ENCODE measurements at regions of chr12 and their contacts with region 1.

Region 1: DNA sequence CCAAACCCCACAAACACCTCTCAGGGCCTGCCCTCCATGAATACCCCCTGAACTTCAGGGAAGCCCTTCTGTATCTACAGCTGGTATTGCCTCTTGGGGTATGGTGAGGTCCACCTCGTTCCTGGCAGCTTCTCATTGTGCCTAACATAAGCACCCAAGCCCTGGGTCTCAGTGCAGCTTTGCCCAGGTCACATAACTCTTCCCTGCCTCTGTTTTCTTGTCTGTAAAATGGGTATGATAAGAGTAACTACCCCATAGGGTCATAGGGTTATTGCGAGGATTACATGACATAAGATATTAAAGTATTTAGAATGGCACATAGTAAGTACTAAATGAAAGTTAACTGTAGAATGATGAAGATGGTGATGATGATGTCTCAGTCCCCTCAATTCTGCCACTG is 190.0 kb upstream of the PWP1 start:
- DNase-seq: no peak
- H3K4me3 ChIP-seq: no peak overlapping the region
- H3K27ac ChIP-seq: no peak overlapping the region
- H3K4me1 ChIP-seq: peaks cover 0 to 11% of the 10 kb centered on the region in 2 donors
- H3K27me3 ChIP-seq: no peaks in the 10 kb centered on the region
- CTCF ChIP-seq: no peak
- POLR2A ChIP-seq: no peak

Region 2: DNA sequence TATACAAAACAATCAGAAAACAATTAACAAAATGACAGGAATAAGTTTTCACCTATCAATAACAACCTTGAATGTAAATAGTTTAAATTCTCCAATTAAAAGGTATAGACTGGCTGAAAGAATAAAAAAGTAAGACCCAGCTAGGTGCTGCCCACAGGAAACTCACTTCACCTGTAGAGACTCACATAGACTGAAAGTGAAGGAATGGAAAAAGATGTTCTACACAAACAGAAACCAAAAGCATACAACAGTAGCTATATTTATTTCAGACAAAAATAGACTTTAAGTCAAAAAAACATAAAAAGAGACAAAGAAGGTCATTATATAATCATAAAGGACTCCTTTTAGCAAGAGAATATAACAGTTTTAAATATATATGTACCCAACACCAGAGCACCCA is 37.6 kb after region 1 on chr12:
- intact Hi-C with region 1: loop called (anchors 1 kb)
- DNase-seq: no peak
- H3K4me3 ChIP-seq: no peak overlapping the region
- H3K27ac ChIP-seq: no peak overlapping the region
- H3K4me1 ChIP-seq: no peaks in the 10 kb centered on the region
- H3K27me3 ChIP-seq: no peaks in the 10 kb centered on the region
- CTCF ChIP-seq: no peak
- POLR2A ChIP-seq: no peak

Measured in breast epithelium (tissue), 4 donors.